Activated CD4-positive, alpha-beta T cell treated with anti-CD3 and anti-CD28 coated beads for 36 hours (primary cell): ENCODE measurements at regions of chr12 and their contacts with region 1.

Region 1: DNA sequence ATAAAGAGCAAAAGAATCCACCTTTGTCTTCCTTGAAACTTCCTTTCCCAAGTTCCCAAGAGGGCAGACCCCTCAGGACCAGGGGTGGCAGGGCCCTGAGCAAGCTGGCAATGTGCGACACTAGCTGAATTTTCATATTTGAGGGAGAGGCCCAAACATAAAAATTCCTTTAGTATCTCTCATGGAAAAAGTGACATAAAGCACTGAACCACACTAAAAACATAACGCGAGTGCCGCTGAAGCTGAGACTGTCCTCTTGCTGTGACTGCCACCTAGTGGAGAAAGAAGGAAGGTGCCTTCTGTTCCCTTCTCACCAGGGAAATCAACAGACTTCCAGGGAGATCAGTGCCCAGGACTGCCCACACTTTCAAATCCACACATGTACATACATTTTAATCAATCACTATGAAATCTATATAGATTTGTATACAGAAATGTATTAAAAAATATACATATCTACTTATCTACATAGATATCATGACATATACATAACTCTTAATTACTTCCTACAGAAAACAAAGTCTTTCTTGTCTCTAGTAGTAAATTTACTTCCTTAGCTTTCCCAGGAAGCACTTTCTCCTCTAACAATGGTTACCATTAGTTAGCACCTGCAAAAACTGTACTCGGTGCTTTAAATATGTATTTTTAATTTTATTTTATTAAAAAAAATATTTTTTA is 53.8 kb downstream of the SSH1 start:
- DNase-seq: peak; percentile 80
- ATAC-seq: peak; percentile 91
- H3K4me3 Mint-ChIP-seq: no peak overlapping the region
- H3K27ac Mint-ChIP-seq: peak overlapping the region; percentile 37
- H3K4me1 Mint-ChIP-seq: peaks cover 6% of the 10 kb centered on the region
- H3K27me3 Mint-ChIP-seq: no peaks in the 10 kb centered on the region

Region 2: GRCh38 chr12:108418164-108418890 is 385.2 kb before region 1 on chr12:
- CTCF ChIA-PET with region 1: no interaction called
- POLR2A ChIA-PET with region 1: no interaction called
- intact Hi-C with region 1: loop called in 1 of 2 experiments (anchors 5 kb)
- DNase-seq: no peak
- ATAC-seq: no peak
- H3K4me3 Mint-ChIP-seq: no peak overlapping the region
- H3K27ac Mint-ChIP-seq: no peak overlapping the region
- H3K4me1 Mint-ChIP-seq: no peaks in the 10 kb centered on the region
- H3K27me3 Mint-ChIP-seq: peaks cover 3% of the 10 kb centered on the region

Region 3: GRCh38 chr12:108611884-108612415 is 191.6 kb before region 1 on chr12:
- CTCF ChIA-PET with region 1: interaction called, 11 read pairs
- POLR2A ChIA-PET with region 1: no interaction called
- intact Hi-C with region 1: loop called in 1 of 2 experiments (anchors 1 kb)
- DNase-seq: peak; percentile 75
- ATAC-seq: peak; percentile 61
- H3K4me3 Mint-ChIP-seq: no peak overlapping the region
- H3K27ac Mint-ChIP-seq: no peak overlapping the region
- H3K4me1 Mint-ChIP-seq: peaks cover 19% of the 10 kb centered on the region
- H3K27me3 Mint-ChIP-seq: no peaks in the 10 kb centered on the region

Region 4: DNA sequence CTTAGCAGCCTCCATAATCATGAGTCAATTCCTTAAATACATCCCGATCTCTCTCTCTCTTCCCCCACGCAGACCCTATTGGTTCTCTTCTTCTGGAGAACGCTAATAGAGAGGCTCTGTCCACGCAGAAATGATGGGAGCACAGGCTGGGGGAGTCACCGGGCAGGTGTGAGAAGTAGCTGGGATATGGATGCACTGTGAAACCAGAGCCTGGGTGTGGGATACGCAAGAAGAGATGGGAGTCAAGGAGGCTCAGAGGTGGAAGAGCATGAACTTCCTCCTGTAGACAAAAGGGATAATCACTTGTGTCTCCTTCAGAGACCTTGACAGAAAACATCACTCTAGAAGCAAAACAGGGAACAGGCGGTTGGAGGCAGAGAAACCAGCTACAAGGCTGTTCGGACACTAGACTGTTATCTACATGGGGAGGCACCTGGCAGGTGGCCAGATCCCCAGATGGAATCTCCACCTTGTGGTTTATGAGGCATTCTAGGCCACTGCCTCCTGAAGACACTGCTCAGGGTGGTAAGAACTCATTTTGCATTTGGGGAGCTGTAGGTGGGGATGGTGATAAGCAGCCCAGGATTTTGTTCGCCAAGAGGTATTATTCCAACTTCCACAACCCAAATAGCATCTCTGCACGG is 162.6 kb before region 1 on chr12:
- CTCF ChIA-PET with region 1: interaction called, 10 read pairs
- POLR2A ChIA-PET with region 1: no interaction called
- intact Hi-C with region 1: no loop called
- DNase-seq: no peak
- ATAC-seq: no peak
- H3K4me3 Mint-ChIP-seq: no peak overlapping the region
- H3K27ac Mint-ChIP-seq: no peak overlapping the region
- H3K4me1 Mint-ChIP-seq: peaks cover 24% of the 10 kb centered on the region
- H3K27me3 Mint-ChIP-seq: no peaks in the 10 kb centered on the region

Region 5: DNA sequence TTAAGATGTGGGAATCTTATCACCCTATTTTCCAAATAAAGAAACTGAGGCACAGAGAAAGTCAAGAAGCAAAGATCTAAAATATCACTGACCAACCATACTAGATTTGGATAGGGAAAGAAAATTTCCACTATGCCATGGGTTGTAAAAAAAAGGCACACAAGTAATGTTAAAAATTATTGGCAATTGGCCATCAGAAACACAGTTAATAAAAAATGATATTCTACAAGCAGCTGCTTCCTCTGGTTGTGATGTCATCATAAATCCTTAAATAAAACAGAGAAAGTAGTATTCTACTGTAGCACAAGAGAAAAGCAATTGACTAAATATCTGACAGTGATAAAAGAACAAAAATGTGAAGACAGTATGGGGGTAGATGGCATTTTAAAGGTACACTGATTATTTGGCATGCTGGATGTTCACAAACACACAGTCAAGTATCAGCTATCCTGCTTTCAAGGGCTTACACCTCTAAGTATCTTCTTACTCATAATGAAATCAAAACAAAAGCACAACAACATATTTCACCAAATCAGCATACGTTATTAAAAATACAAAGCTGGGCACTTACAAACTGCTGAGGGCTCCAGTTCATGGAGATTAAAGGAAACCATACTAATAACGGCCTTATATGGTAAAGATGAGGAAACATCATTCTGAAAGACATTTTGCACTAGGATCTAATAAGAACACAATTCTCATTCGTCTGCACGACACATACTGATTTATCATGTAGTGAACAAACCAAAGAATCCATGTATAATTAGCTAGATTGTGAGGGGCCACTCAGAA is 117.9 kb before region 1 on chr12:
- CTCF ChIA-PET with region 1: interaction called, 11 read pairs
- POLR2A ChIA-PET with region 1: no interaction called
- intact Hi-C with region 1: no loop called
- DNase-seq: no peak
- ATAC-seq: no peak
- H3K4me3 Mint-ChIP-seq: no peak overlapping the region
- H3K27ac Mint-ChIP-seq: no peak overlapping the region
- H3K4me1 Mint-ChIP-seq: peaks cover 47% of the 10 kb centered on the region
- H3K27me3 Mint-ChIP-seq: no peaks in the 10 kb centered on the region

Region 6: GRCh38 chr12:108731105-108731865 is 72.3 kb before region 1 on chr12 and contains the start of gene CORO1C:
- CTCF ChIA-PET with region 1: interaction called, 7 read pairs
- POLR2A ChIA-PET with region 1: no interaction called
- intact Hi-C with region 1: loop called (anchors 1 to 5 kb)
- DNase-seq: peak; percentile 98
- ATAC-seq: peak; percentile 78
- H3K4me3 Mint-ChIP-seq: peak within 1 kb of the TSS; percentile 88
- H3K27ac Mint-ChIP-seq: peak within 1 kb of the TSS; percentile 93
- H3K4me1 Mint-ChIP-seq: peaks cover 36% of the 10 kb centered on the region
- H3K27me3 Mint-ChIP-seq: no peaks in the 10 kb centered on the region
- total RNA-seq, gene CORO1C: 83.5 to 90.8 TPM

Region 7: DNA sequence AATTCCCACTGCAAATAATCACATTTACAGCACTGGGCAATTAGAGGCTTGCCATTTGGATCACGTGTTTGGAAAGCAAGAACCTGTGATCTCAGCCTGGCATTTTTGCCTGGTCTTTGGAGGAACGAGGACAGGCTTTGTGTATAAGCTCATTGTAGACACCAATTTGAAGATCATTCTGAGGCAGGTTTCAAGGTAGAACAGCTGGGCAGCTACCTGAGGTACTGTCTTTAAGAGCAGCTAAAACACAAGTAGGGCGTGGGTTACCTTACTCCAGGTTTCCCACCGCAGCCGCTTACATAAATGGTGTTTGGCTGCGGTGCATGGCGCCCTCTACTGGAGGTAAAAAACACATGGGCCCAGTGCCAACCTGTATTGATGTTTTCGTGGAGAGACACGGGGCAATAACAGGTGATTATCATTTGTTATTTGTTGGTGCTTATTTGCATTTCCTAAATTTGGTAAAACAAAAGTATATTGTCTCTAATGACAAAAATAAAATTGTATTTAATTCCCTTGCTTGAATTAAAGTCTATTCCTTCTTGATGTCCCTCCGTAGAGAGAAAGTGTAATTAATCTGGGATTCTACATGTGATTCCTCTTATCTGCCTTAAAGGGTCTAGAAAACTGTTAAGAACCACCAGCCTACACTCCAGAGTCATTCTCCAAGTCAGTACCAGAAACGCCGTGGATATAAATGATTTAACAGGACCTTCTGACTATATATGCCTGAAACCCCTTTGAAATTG is 147.6 kb after region 1 on chr12:
- CTCF ChIA-PET with region 1: interaction called, 10 read pairs
- POLR2A ChIA-PET with region 1: no interaction called
- intact Hi-C with region 1: loop called (anchors 1 to 10 kb)
- DNase-seq: peak; percentile 83
- ATAC-seq: peak; percentile 84
- H3K4me3 Mint-ChIP-seq: no peak overlapping the region
- H3K27ac Mint-ChIP-seq: no peak overlapping the region
- H3K4me1 Mint-ChIP-seq: peaks cover 2% of the 10 kb centered on the region
- H3K27me3 Mint-ChIP-seq: peaks cover 8% of the 10 kb centered on the region

Region 8: GRCh38 chr12:109033234-109034196 is 229.9 kb after region 1 on chr12:
- CTCF ChIA-PET with region 1: no interaction called
- POLR2A ChIA-PET with region 1: no interaction called
- intact Hi-C with region 1: no loop called
- DNase-seq: no peak
- ATAC-seq: no peak
- H3K4me3 Mint-ChIP-seq: no peak overlapping the region
- H3K27ac Mint-ChIP-seq: no peak overlapping the region
- H3K4me1 Mint-ChIP-seq: no peaks in the 10 kb centered on the region
- H3K27me3 Mint-ChIP-seq: peaks cover 15% of the 10 kb centered on the region